ENCODE measurements at regions of chr17 and their contacts with region 1.

Region 1: GRCh38 chr17:75319904-75320691 is 30.9 kb upstream of the SLC25A19 start:
- DNase-seq: no peak
- H3K4me3 ChIP-seq: no peak overlapping the region
- H3K27ac ChIP-seq: no peak overlapping the region
- H3K4me1 ChIP-seq: no peaks in the 10 kb centered on the region
- H3K27me3 ChIP-seq: no peaks in the 10 kb centered on the region
- CTCF ChIP-seq: no peak

Region 2: GRCh38 chr17:75261336-75262111 is 58.6 kb before region 1 on chr17 and contains the starts of genes GGA3 and MRPS7:
- CTCF ChIA-PET with region 1: no interaction called
- dilution Hi-C with region 1: loop called (anchors 5 kb)
- in situ Hi-C with region 1: no loop called
- intact Hi-C with region 1: no loop called
- DNase-seq: peak; percentile 92
- H3K4me3 ChIP-seq: peak within 1 kb of the TSS; percentile 75 to 92 (median 79)
- H3K27ac ChIP-seq: peak within 1 kb of the TSS; percentile 98
- H3K4me1 ChIP-seq: peaks cover 18% of the 10 kb centered on the region
- H3K27me3 ChIP-seq: no peaks in the 10 kb centered on the region
- CTCF ChIP-seq: no peak
- total RNA-seq, gene GGA3: 9.7 to 30.9 TPM
- total RNA-seq, gene MRPS7: 36.0 to 55.5 TPM

Region 3: DNA sequence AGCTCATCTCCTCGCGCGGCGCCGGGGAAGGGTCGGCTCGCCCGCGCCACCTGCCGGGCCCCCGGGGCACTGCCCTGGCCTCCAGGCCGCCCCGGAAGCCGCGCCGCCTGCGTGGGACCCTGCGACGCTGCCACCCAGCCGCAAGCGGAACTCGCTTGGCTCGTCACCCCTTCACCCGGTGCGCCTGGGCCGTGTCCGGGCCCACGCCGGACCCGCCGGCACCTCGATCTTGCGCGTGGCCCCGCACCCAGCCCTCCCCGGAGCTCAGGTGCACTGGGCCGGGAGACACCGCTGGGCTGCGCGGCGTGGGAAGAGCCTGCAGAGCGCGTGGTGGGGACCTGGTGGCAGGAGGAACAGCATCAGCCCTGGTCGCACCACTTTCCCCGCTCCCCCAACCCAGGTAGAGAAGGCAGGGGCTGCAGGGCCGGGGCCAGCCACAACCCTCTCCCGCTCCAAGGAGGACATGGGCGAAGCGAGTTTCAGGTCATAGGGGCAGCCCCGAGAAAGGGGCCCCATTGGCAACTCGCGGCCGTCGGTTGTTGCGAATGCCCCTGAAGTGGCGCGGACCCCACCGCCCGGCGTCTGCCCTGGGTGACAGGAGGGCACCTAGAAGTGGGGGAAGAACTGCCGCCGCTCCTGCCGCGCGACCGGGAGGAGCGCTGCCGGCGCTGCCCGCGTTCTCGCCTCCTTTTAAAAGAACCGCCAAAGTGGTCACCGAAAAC is 48.7 kb before region 1 on chr17:
- CTCF ChIA-PET with region 1: interaction called, 15 read pairs
- dilution Hi-C with region 1: no loop called
- in situ Hi-C with region 1: no loop called
- intact Hi-C with region 1: loop called (anchors 5 kb)
- DNase-seq: peak; percentile 60
- H3K4me3 ChIP-seq: peak overlapping the region; percentile 59 to 76 (median 70)
- H3K27ac ChIP-seq: no peak overlapping the region
- H3K4me1 ChIP-seq: peaks cover 20% of the 10 kb centered on the region
- H3K27me3 ChIP-seq: no peaks in the 10 kb centered on the region
- CTCF ChIP-seq: peak; percentile 53 to 69

Region 4: DNA sequence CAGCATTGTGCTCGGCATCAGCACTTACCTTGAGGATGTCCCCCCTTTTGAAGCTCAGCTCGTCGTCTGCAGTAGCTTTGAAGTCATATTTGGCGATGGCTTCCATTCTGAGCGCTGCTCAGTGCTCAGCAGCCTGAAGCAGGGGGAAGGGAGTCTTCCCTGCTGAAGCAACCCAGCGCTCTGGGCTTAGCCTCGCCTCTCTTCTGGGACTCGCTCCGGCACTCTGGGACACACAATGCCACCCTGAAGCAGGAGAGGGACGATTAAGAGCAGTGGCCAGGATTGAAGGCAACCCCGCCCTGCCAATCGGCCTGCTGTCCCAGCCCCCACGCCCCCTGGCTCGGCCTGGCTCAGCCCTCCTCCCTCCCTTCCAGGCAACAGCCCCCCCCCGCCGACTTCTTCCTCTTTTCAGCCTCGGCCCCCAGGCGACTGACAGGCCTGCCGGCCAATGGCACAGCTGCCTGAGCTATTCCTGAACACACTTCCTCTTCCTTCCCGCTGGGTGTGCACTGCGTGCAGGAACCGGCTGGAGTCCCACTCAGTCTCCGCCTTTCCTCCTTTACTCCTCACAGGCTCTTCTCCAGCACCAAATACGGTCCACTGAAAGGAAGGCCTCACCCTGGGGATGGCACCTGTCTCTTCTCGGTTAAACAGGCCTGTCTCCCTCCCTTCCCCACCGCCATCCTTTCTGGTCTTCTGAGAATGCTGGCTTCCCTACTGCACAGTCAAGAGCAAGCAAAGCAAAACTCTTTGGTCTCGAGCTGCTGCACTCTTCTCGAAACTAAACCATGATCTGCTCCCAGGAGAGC is 73.6 kb after region 1 on chr17:
- CTCF ChIA-PET with region 1: no interaction called
- dilution Hi-C with region 1: no loop called
- in situ Hi-C with region 1: loop called in 1 of 2 experiments (anchors 10 kb)
- intact Hi-C with region 1: no loop called
- DNase-seq: peak; percentile 98
- H3K4me3 ChIP-seq: peak overlapping the region; percentile 57 to 85 (median 75)
- H3K27ac ChIP-seq: peak overlapping the region; percentile 20
- H3K4me1 ChIP-seq: peaks cover 29% of the 10 kb centered on the region
- H3K27me3 ChIP-seq: no peaks in the 10 kb centered on the region
- CTCF ChIP-seq: peak in 1 of 2 donors; percentile 17

Region 5: GRCh38 chr17:75405365-75406221 is 85.5 kb after region 1 on chr17 and contains the start of gene GRB2:
- CTCF ChIA-PET with region 1: interaction called, 3 read pairs
- dilution Hi-C with region 1: loop called (anchors 5 kb)
- in situ Hi-C with region 1: no loop called
- intact Hi-C with region 1: loop called (anchors 1 kb)
- DNase-seq: peak; percentile 93
- H3K4me3 ChIP-seq: peak within 1 kb of the TSS; percentile 82 to 93 (median 90)
- H3K27ac ChIP-seq: peak within 1 kb of the TSS; percentile 63
- H3K4me1 ChIP-seq: peaks cover 13% of the 10 kb centered on the region
- H3K27me3 ChIP-seq: no peaks in the 10 kb centered on the region
- CTCF ChIP-seq: no peak
- total RNA-seq, gene GRB2: 61.5 to 78.6 TPM

Region 6: DNA sequence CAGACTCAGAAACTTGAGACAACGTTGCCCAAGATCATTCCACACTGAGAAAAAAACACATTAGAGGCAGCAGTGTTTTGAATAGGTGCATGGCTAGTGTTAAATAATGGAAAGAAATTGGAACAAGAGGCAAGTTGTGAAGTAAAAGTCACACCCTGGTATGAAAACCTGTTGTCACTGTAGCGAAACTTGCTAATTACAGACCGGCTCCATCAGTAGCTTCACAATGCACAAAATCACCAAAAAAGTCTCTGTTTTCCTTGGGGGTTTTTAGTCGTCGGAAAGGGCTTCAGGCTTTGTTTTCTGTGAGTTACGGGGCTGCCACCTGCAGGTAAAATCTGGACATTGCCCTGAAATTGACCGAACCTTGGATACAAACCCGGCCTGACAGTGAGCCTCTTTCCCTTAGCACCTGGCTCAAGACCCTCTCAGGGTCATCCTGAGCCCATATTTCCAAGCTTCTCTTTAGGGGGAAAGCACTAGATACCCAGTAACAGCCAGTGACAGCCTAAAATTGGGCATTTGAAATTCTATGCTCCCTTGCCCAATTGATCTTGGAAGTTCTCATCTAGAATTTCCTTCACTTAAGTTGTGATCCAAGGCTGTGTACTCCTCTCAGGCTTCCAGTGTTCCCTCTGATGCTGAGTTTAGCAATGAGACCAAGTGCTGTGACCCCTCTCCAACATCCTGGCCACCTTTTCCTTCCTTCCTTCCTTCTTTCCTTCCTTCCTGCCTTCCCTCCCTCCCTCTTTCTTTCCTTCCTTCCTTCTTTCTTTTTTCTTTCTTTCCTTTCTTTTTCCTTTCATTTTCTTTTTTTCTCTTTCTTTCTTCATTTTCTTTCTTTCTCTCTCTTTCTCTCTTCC is 92.6 kb after region 1 on chr17:
- CTCF ChIA-PET with region 1: no interaction called
- dilution Hi-C with region 1: loop called (anchors 5 kb)
- in situ Hi-C with region 1: no loop called
- intact Hi-C with region 1: loop called (anchors 1 kb)
- DNase-seq: peak; percentile 62
- H3K4me3 ChIP-seq: no peak overlapping the region
- H3K27ac ChIP-seq: no peak overlapping the region
- H3K4me1 ChIP-seq: peaks cover 3% of the 10 kb centered on the region
- H3K27me3 ChIP-seq: no peaks in the 10 kb centered on the region
- CTCF ChIP-seq: peak; percentile 69 to 75

Region 7: DNA sequence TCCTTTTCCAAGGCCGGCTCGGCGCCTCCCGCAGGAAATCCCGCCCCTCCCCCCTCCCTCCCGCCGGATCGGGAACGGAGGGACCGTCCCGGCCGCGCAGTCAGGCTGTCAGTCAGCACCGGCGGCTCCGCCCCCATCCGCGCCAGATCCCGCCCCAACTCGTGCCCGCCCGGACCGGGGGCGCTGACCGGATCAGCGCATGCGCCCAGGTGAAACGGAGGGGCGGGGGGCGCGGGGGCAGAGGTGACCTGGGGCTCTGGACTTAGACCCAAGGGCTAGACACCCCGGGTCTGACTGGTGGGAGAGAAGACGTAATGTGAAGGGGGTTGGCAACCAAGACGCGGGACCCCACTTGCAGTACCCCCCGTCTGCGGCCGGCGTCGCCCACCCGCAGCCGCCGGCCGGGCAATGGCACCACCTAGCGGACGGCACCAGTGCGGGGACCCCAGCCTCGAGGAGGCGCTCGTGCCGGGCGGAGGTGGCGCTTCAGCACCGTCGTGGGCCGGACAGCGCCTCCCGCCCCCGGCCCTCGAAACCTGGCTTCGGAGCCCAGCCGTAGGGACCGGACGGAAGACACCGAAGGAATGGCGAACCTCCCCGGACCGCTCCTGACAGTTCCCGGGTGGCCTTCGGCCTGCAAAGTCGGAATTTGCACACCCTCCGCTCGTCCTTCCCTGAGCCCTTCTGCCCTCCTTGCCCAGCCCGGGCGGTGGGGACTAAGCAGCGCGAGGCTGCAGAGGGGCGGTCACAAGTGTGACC is 195.6 kb after region 1 on chr17 and contains the start of gene CASKIN2:
- CTCF ChIA-PET with region 1: no interaction called
- dilution Hi-C with region 1: loop called (anchors 5 kb)
- in situ Hi-C with region 1: no loop called
- intact Hi-C with region 1: loop called (anchors 5 kb)
- DNase-seq: peak; percentile 86
- H3K4me3 ChIP-seq: peak within 1 kb of the TSS; percentile 57 to 87 (median 70)
- H3K27ac ChIP-seq: no peak within 1 kb of the TSS
- H3K4me1 ChIP-seq: peaks cover 25% of the 10 kb centered on the region
- H3K27me3 ChIP-seq: no peaks in the 10 kb centered on the region
- CTCF ChIP-seq: peak; percentile 80 to 98
- total RNA-seq, gene CASKIN2: 10.5 to 22.1 TPM

Measured in mammary epithelial cell (primary cell).